HepG2 (cell line): ENCODE measurements at regions of chr14 and their contacts with region 1.

Region 1: GRCh38 chr14:68952531-68953195 is 26.4 kb downstream of the ACTN1 start:
- DNase-seq: no peak
- ATAC-seq: no peak
- H3K4me3 ChIP-seq: no peak overlapping the region
- H3K27ac ChIP-seq: peak overlapping the region; percentile 51
- H3K4me1 ChIP-seq: peaks cover 99% of the 10 kb centered on the region
- H3K27me3 ChIP-seq: no peaks in the 10 kb centered on the region
- CTCF ChIP-seq: no peak
- EP300 ChIP-seq: no peak
- POLR2A ChIP-seq: no peak
- RAD21 ChIP-seq: no peak

Region 2: GRCh38 chr14:68939893-68940613 is 12.6 kb before region 1 on chr14:
- CTCF ChIA-PET with region 1: no interaction called
- POLR2A ChIA-PET with region 1: interaction called, 13 read pairs
- in situ Hi-C with region 1: no loop called
- intact Hi-C with region 1: no loop called
- DNase-seq: peak; percentile 78
- ATAC-seq: peak; percentile 25
- H3K4me3 ChIP-seq: peak overlapping the region in 2 of 3 experiments; percentile 31 to 64; a peak in 3 of 6 replicates
- H3K27ac ChIP-seq: peak overlapping the region; percentile 78
- H3K4me1 ChIP-seq: peaks cover 93% of the 10 kb centered on the region
- H3K27me3 ChIP-seq: no peaks in the 10 kb centered on the region
- CTCF ChIP-seq: no peak
- EP300 ChIP-seq: peak in 1 of 2 experiments; percentile 20; a peak in 1 of 4 replicates
- POLR2A ChIP-seq: no peak
- RAD21 ChIP-seq: no peak

Region 3: GRCh38 chr14:68964300-68965093 is 11.8 kb after region 1 on chr14:
- CTCF ChIA-PET with region 1: no interaction called
- POLR2A ChIA-PET with region 1: interaction called, 12 read pairs
- in situ Hi-C with region 1: no loop called
- intact Hi-C with region 1: no loop called
- DNase-seq: no peak
- ATAC-seq: peak; percentile 79
- H3K4me3 ChIP-seq: peak overlapping the region in 1 of 3 experiments; percentile 23; a peak in 1 of 6 replicates
- H3K27ac ChIP-seq: peak overlapping the region; percentile 43
- H3K4me1 ChIP-seq: peaks cover 96% of the 10 kb centered on the region
- H3K27me3 ChIP-seq: no peaks in the 10 kb centered on the region
- CTCF ChIP-seq: no peak
- EP300 ChIP-seq: no peak
- POLR2A ChIP-seq: no peak
- RAD21 ChIP-seq: no peak

Region 4: DNA sequence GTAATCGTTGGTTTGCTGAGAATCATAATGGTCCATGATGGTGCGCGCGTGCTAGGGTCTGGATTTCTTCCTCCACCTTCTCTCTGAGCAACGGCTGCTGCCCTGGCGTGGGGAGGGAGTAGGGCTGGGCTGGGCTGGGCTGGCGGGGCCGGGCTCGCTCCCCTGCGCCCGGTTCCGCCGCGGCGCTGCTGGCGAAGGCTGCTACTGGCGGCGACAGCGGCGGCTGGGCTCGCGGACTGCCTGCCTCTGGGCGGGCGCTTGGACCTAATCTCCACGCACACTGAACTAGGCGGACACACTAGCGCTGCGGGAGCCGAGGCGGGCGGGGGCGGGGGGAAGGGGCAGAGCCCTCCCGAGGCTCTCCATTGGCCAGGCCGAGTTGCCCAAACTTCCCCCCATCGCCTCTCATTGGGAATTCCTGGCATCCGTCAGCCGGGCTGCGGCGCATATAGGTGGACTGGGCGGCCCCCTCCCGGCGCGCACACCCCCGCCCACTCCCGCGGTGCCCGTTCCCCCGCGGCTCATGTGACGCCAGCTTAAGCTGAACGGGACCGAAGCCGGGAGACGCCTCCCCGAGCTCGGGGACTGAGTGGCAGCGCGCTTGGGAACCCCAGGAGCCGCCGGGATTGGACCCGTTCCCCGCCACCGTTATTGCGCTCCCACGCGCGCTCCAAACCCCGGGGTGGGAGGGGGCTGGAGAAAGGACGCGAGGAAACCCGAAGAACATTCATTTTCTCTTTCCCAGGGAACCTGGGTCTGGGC is 26.5 kb after region 1 on chr14 and contains the start of gene ACTN1:
- CTCF ChIA-PET with region 1: no interaction called
- POLR2A ChIA-PET with region 1: interaction called, 36 read pairs
- in situ Hi-C with region 1: no loop called
- intact Hi-C with region 1: loop called (anchors 1 kb)
- DNase-seq: peak; percentile 94
- ATAC-seq: peak; percentile 78
- H3K4me3 ChIP-seq: peak within 1 kb of the TSS; percentile 95 to 97 (median 95)
- H3K27ac ChIP-seq: peak within 1 kb of the TSS; percentile 90
- H3K4me1 ChIP-seq: peaks cover 68% of the 10 kb centered on the region
- H3K27me3 ChIP-seq: no peaks in the 10 kb centered on the region
- CTCF ChIP-seq: peak; percentile 25; the same call in 1 of the 2 replicates
- EP300 ChIP-seq: no peak
- POLR2A ChIP-seq: peak; percentile 72 to 85
- RAD21 ChIP-seq: peak; percentile 17; the same call in 1 of the 2 replicates
- total RNA-seq, gene ACTN1: 58.6 and 62.4 TPM in 2 replicates

Region 5: GRCh38 chr14:69183735-69184134 is 231.1 kb after region 1 on chr14:
- CTCF ChIA-PET with region 1: no interaction called
- POLR2A ChIA-PET with region 1: no interaction called
- in situ Hi-C with region 1: no loop called
- intact Hi-C with region 1: no loop called
- DNase-seq: peak; percentile 15
- ATAC-seq: peak; percentile 61
- H3K4me3 ChIP-seq: no peak overlapping the region
- H3K27ac ChIP-seq: no peak overlapping the region
- H3K4me1 ChIP-seq: peaks cover 13% of the 10 kb centered on the region
- H3K27me3 ChIP-seq: peaks cover 0 to 3% of the 10 kb centered on the region in 2 experiments; a peak in 1 of 5 replicates
- CTCF ChIP-seq: no peak
- EP300 ChIP-seq: no peak
- POLR2A ChIP-seq: no peak
- RAD21 ChIP-seq: no peak